Sigmoid colon (tissue), 7 donors: ENCODE measurements at regions of chr7 and their contacts with region 1.

Region 1: GRCh38 chr7:11831736-11832495 is at the start of gene THSD7A:
- DNase-seq: peak; percentile 66
- H3K4me3 ChIP-seq: peak within 1 kb of the TSS; percentile 48 to 64 (median 56)
- H3K27ac ChIP-seq: peak within 1 kb of the TSS; percentile 48 to 79 (median 70)
- H3K4me1 ChIP-seq: peaks cover 0 to 24% (median 7%) of the 10 kb centered on the region in 4 donors
- H3K27me3 ChIP-seq: no peaks in the 10 kb centered on the region
- CTCF ChIP-seq: no peak
- EP300 ChIP-seq: no peak
- POLR2A ChIP-seq: no peak
- total RNA-seq, gene THSD7A: 5.0 to 6.9 (median 6.1) TPM

Region 2: GRCh38 chr7:11726794-11727155 is 105.1 kb before region 1 on chr7:
- intact Hi-C with region 1: loop called (anchors 10 kb)
- DNase-seq: peak; percentile 74
- H3K4me3 ChIP-seq: no peak overlapping the region
- H3K27ac ChIP-seq: peak overlapping the region in 3 of 4 donors; percentile 1 to 59 (median 46)
- H3K4me1 ChIP-seq: peaks cover 0 to 18% (median 6%) of the 10 kb centered on the region in 4 donors
- H3K27me3 ChIP-seq: no peaks in the 10 kb centered on the region
- CTCF ChIP-seq: no peak
- EP300 ChIP-seq: no peak
- POLR2A ChIP-seq: no peak

Region 3: DNA sequence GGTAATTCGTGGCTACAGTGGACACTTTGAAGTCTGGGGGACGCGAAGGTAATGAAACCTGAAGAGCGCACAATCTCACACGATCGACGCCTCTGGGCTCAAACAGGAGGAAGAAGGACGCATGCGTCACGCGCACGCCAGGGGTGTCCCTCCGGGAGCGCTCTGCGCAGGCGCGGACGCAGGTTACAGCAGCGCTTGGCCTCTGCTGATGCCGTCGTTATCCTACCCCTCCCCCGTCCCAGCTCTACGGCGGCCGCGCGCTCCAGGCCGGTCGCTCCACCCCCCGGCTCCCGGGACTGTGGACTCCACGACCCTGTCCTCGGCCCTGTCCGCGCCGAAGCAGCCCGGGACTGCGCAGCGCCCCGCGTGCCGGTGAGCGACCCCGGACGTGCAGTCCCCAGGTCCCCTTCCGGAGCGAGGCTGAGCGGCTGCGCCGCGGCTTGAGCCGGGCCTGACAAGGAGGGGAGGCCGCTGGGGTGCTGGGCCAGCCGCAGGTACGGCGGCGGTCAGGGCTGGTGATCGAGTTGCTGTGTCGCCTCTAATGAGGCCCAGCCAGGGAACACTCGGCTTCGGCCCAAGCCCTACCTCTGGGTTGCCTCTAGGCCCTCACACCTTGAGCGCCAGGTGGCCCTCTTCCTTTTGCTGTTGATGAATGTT is 379.3 kb after region 1 on chr7 and contains the start of gene TMEM106B:
- intact Hi-C with region 1: loop called (anchors 5 kb)
- DNase-seq: peak; percentile 98
- H3K4me3 ChIP-seq: peak within 1 kb of the TSS; percentile 68 to 92 (median 86)
- H3K27ac ChIP-seq: peak within 1 kb of the TSS; percentile 90 to 99 (median 96)
- H3K4me1 ChIP-seq: peaks cover 0 to 28% (median 12%) of the 10 kb centered on the region in 4 donors
- H3K27me3 ChIP-seq: no peaks in the 10 kb centered on the region
- CTCF ChIP-seq: no peak
- EP300 ChIP-seq: peak in 1 of 4 donors; percentile 7
- POLR2A ChIP-seq: peak; percentile 71 to 73
- total RNA-seq, gene TMEM106B: 64.5 to 86.9 (median 80.3) TPM